ENCODE measurements at regions of chr11 and their contacts with region 1.

Region 1: DNA sequence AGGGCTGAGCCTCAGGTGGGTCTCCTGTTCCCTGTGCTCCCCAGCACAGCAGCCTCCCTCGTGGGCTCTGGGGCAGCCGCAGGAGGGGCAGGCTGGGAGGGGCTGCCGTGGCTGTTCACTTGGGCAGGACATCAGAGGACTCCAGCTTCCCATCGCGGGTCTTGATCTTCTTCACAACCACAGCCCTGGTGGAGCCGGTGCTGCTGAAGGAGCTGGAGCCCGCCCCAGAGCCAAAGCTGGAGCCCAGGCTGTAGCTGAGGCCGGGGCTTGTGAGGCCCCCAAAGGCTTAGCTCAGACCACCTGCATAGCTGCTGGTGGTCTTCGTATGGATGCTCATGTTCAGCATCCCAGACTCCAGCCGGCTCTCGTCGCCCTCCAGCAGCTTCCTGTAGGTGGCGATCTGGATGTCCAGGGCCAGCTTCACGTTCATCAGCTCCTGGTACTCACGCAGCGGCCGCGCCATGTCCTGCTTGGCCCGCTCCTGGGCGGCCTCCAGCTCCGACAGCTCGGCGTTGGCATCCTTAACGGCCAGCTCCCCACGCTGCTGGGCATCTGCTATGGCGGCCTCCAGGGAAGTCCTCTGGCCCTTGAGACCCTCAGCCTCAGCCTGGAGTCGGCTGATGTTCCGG is 126.1 kb downstream of the NECTIN1 start:
- DNase-seq: peak; percentile 53
- ATAC-seq: no peak
- H3K4me3 Mint-ChIP-seq: no peak overlapping the region
- H3K27ac Mint-ChIP-seq: no peak overlapping the region
- H3K4me1 Mint-ChIP-seq: peaks cover 16% of the 10 kb centered on the region
- H3K27me3 Mint-ChIP-seq: peaks cover 39% of the 10 kb centered on the region
- CTCF ChIP-seq: no peak

Region 2: DNA sequence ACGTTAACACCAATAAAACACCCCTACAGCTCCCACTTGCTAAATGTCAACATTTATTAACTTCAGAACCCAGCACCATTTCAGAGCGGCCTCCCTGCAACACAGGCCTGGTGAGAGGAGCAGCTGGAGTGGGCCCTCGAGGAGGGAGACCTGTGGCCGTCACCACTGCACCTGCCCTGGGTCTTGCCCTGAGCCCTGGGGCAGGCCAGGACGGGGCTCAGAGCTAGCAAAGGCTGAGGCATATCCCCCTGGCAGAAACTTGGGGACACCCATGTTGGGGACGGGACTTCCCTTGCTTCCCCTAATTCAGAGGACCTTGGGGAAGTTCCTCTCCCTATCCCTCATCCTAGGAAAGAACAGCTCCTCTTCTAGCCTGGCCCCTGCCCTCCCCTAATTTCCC is 42.6 kb before region 1 on chr11:
- CTCF ChIA-PET with region 1: interaction called, 10 read pairs
- POLR2A ChIA-PET with region 1: no interaction called
- DNase-seq: no peak
- ATAC-seq: no peak
- H3K4me3 Mint-ChIP-seq: no peak overlapping the region
- H3K27ac Mint-ChIP-seq: no peak overlapping the region
- H3K4me1 Mint-ChIP-seq: no peaks in the 10 kb centered on the region
- H3K27me3 Mint-ChIP-seq: peaks cover 27% of the 10 kb centered on the region
- CTCF ChIP-seq: no peak

Region 3: GRCh38 chr11:119584193-119585037 is 18.4 kb before region 1 on chr11:
- CTCF ChIA-PET with region 1: interaction called, 28 read pairs
- POLR2A ChIA-PET with region 1: no interaction called
- DNase-seq: peak; percentile 83
- ATAC-seq: peak; percentile 81
- H3K4me3 Mint-ChIP-seq: peak overlapping the region; percentile 75
- H3K27ac Mint-ChIP-seq: no peak overlapping the region
- H3K4me1 Mint-ChIP-seq: peaks cover 16% of the 10 kb centered on the region
- H3K27me3 Mint-ChIP-seq: peaks cover 44% of the 10 kb centered on the region
- CTCF ChIP-seq: no peak

Region 4: DNA sequence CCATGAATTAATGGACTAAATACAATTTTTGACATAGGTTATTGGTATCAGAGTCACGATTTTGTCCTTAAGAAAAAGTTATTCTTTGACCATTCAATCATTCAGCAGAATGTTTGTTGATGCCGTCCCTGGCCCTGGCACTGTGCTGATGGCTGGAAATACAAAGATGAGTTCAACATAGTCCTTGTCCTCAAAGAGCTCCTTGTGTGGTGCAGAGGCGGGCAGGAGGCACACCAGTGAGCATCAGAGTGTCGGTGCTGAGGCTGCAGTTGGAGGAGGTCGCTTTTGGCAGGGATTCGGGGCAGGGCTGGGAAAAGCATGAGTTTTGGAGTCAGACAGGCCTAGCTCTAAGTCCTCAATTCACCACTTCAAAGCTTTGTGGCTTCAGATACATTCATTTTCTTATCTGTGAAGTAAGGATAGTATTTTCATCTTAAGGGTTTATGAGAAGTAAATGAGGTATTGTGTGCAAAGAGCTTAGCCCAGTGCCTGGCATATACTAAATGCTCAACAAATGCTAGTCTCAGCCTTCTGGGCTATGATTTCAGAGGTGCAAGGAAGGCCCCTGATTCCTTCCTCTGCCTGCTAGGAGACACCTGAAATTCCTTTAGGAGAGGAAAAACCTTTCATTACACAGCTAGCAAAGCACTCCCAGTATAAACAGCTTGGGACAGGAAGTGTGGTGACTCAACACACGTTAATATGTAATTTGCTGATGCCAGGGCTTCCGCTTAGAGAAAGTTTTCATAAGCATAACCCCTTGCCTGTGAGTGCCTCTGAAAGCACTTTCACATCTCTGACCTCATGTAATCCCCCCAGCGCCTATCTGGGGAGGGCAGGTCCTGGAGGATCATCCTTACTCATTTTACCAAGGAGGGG is 12.4 kb after region 1 on chr11:
- CTCF ChIA-PET with region 1: interaction called, 13 read pairs
- POLR2A ChIA-PET with region 1: no interaction called
- DNase-seq: no peak
- ATAC-seq: no peak
- H3K4me3 Mint-ChIP-seq: no peak overlapping the region
- H3K27ac Mint-ChIP-seq: no peak overlapping the region
- H3K4me1 Mint-ChIP-seq: peaks cover 44% of the 10 kb centered on the region
- H3K27me3 Mint-ChIP-seq: peaks cover 28% of the 10 kb centered on the region
- CTCF ChIP-seq: no peak

Region 5: DNA sequence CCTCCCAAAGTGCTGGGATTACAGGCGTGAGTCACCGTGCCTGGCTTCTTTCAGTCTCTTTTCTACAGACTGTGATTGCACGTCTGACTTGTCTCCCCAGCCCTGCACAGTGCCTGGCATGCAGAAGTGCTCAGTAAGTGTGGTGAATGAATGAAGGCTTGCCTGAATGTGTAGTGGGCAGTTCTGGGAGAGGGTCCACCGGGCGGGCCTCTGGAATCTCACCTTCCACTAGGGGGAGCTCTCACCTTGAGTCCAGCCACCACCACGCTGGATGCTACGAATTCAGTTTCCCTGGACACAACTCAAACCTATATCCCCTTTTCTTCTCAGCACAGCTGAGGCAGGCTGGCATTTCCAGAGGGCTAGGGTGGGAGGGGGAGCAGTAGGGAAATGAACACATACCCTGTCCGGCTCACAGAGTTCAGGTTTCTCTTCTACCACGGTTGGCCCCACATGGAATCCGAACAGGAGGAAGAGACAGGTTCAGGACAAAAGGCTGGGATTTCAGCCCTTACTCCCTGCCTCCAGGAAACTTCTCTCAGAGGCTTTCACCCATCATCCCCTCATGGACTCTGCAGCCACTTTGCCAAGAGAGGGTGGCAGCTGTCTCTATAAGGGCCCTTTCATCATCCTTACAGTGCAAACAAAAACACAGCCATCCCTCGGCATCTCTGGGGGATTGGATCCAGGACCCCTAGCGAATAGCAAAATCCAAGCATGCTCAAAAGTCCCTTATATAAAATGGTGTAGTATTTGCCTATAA is 39.3 kb after region 1 on chr11:
- CTCF ChIA-PET with region 1: interaction called, 11 read pairs
- POLR2A ChIA-PET with region 1: no interaction called
- DNase-seq: no peak
- ATAC-seq: peak; percentile 61
- H3K4me3 Mint-ChIP-seq: no peak overlapping the region
- H3K27ac Mint-ChIP-seq: no peak overlapping the region
- H3K4me1 Mint-ChIP-seq: peaks cover 11% of the 10 kb centered on the region
- H3K27me3 Mint-ChIP-seq: peaks cover 12% of the 10 kb centered on the region
- CTCF ChIP-seq: peak; percentile 72